ENCODE measurements at regions of chr6 and their contacts with region 1.

Region 1: GRCh38 chr6:156599978-156600590 is 177.1 kb upstream of the ARID1B start:
- DNase-seq: no peak

Region 2: GRCh38 chr6:156575361-156575760 is 24.7 kb before region 1 on chr6:
- intact Hi-C with region 1: loop called in 1 of 2 experiments (anchors 1 kb)
- DNase-seq: no peak

Region 3: GRCh38 chr6:156901309-156902019 is 301.4 kb after region 1 on chr6:
- intact Hi-C with region 1: no loop called
- DNase-seq: no peak

Measured in posterior vena cava (tissue), 2 donors.